ENCODE measurements at regions of chr3 and their contacts with region 1.

Region 1: GRCh38 chr3:169564883-169565282 is 98.6 kb downstream of the MECOM start:
- DNase-seq: peak in 3 of 4 experiments; percentile 12 to 26 (median 21)
- ATAC-seq: peak; percentile 83
- H3K4me3 ChIP-seq: no peak overlapping the region
- H3K27ac ChIP-seq: no peak overlapping the region
- H3K4me1 ChIP-seq: no peaks in the 10 kb centered on the region
- H3K27me3 ChIP-seq: no peaks in the 10 kb centered on the region
- CTCF ChIP-seq: peak; percentile 12 to 38 (median 23); a peak in 4 of 6 replicates
- EP300 ChIP-seq: no peak
- POLR2A ChIP-seq: no peak
- RAD21 ChIP-seq: no peak

Region 2: DNA sequence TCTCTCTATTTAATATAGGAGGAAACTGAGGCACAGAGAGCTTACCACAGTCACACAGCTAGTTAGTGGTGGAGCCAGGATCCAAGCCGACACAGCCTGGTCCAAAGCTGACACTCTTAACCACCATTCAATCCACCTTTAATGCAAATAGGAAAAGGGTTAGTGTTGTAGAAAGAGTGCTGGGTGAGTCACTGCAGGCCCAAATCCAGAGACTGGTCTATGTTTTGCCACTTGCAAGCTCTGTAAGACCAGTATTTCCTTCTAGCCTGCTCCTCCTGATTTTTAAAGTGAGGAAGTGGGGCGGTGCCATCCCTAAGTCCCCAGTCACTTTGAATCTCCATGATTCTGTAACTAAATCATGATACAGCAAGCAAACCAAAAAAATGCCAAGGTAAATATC is 12.3 kb before region 1 on chr3:
- CTCF ChIA-PET with region 1: no interaction called
- POLR2A ChIA-PET with region 1: interaction called, 4 read pairs
- in situ Hi-C with region 1: no loop called
- intact Hi-C with region 1: loop called (anchors 1 kb)
- DNase-seq: no peak
- ATAC-seq: no peak
- H3K4me3 ChIP-seq: no peak overlapping the region
- H3K27ac ChIP-seq: no peak overlapping the region
- H3K4me1 ChIP-seq: no peaks in the 10 kb centered on the region
- H3K27me3 ChIP-seq: peaks cover 0 to 2% of the 10 kb centered on the region in 2 experiments; a peak in 2 of 5 replicates
- CTCF ChIP-seq: no peak
- EP300 ChIP-seq: no peak
- POLR2A ChIP-seq: no peak
- RAD21 ChIP-seq: no peak

Region 3: DNA sequence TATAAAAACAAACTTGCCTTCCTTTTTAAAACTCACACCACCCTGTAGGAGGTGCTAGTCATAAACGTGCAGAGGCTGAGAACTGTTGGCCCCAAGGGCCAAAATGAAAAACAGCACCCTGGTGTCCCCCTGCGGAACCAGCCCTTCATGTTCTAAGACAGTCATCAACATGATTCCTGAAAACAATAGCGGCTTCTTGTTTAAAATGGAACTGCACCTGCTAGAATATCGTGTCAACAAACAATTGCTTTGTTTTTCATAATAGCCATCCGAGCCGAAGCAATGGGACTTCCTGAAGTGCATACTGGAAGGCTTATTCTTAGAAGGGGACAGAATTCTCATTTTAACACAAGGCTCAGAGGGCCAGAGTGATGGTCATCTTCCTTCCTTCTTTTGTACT is 54.9 kb after region 1 on chr3:
- CTCF ChIA-PET with region 1: no interaction called
- POLR2A ChIA-PET with region 1: no interaction called
- in situ Hi-C with region 1: no loop called
- intact Hi-C with region 1: no loop called
- DNase-seq: peak in 1 of 4 experiments; percentile 11
- ATAC-seq: peak; percentile 77
- H3K4me3 ChIP-seq: no peak overlapping the region
- H3K27ac ChIP-seq: no peak overlapping the region
- H3K4me1 ChIP-seq: no peaks in the 10 kb centered on the region
- H3K27me3 ChIP-seq: peaks cover 5 to 22% of the 10 kb centered on the region in 2 experiments; a peak in 4 of 5 replicates
- CTCF ChIP-seq: peak; percentile 13 to 63 (median 32); a peak in 4 of 6 replicates
- EP300 ChIP-seq: no peak
- POLR2A ChIP-seq: no peak
- RAD21 ChIP-seq: no peak

Measured in K562 (cell line).